ENCODE measurements at regions of chr11 and their contacts with region 1.

Region 1: DNA sequence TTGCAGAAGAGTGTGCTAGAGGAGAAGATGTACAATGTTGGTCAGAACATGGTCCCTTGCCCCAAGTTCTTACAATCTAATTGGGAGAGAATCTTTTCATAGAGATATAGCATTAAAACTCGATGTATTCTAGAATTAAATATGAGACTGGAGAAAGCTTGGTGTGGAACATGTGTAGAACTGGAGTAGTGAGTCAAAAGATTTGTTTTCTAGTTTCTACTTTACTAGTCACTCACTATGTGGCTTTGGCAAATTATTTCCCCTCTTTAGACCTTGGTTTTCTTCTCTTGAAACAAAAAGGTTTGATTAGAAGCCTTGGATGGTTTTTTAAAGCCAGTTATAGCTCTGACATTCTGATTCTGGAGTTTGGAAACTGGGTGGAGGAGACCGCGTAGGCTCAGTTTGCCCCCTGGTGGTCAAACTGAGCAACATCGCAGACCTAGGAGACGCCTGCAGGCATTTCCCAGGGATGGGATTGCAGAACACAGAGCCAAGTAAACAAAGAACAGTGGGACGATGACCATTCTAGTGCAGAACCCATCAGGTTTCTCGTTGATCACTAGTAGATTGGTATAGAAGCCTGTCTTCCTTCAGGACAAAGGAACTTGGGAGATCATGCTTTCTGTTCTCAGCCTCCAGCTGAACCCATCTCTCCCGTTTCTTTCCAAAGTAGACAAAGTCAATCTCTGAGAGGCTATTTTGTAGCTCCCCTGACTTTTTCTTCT is 8.5 kb upstream of the CHRDL2 start:
- DNase-seq: peak; percentile 39 to 78 (median 68)
- ATAC-seq: peak; percentile 88 to 90
- H3K4me3 ChIP-seq: no peak overlapping the region
- H3K27ac ChIP-seq: no peak overlapping the region
- H3K4me1 ChIP-seq: no peaks in the 10 kb centered on the region
- H3K27me3 ChIP-seq: no peaks in the 10 kb centered on the region

Region 2: DNA sequence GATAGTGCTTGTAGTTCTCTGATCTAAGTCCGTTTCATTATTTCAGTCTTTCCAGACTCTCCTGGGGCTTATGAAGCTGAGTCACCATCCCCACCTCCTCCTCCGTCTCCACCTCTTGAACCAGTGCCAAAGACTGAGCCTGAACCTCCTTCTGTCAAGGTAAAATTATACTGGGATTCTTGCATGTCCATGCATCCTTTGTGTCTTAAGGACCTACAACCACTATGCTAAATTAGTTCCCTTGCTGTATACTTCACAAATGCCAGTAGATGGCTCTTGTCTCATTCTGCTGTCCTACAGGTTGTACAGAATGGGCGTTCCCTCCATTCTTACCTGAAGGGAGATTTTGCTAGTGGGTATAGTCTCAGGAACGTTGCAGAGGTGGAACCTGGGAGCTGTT is 105.2 kb before region 1 on chr11:
- intact Hi-C with region 1: loop called in 1 of 4 experiments (anchors 10 kb)
- DNase-seq: no peak
- ATAC-seq: peak in 1 of 2 donors; percentile 63
- H3K4me3 ChIP-seq: no peak overlapping the region
- H3K27ac ChIP-seq: no peak overlapping the region
- H3K4me1 ChIP-seq: no peaks in the 10 kb centered on the region
- H3K27me3 ChIP-seq: no peaks in the 10 kb centered on the region

Region 3: GRCh38 chr11:74669211-74670160 is 70.2 kb before region 1 on chr11:
- intact Hi-C with region 1: no loop called
- DNase-seq: no peak
- ATAC-seq: no peak
- H3K4me3 ChIP-seq: no peak overlapping the region
- H3K27ac ChIP-seq: no peak overlapping the region
- H3K4me1 ChIP-seq: peaks cover 3% of the 10 kb centered on the region
- H3K27me3 ChIP-seq: no peaks in the 10 kb centered on the region